B cell (primary cell): ENCODE measurements at regions of chr22 and their contacts with region 1.

Region 1: GRCh38 chr22:35376728-35377472 is 4.0 kb upstream of the HMOX1 start:
- DNase-seq: peak; percentile 87
- ATAC-seq: peak; percentile 77
- H3K4me3 ChIP-seq: peak overlapping the region in 1 of 5 experiments; percentile 38
- H3K4me3 Mint-ChIP-seq: peak overlapping the region; percentile 79
- H3K27ac ChIP-seq: no peak overlapping the region
- H3K27ac Mint-ChIP-seq: peak overlapping the region; percentile 93
- H3K4me1 ChIP-seq: peaks cover 35 to 46% of the 10 kb centered on the region in 2 donors
- H3K4me1 Mint-ChIP-seq: peaks cover 50% of the 10 kb centered on the region
- H3K27me3 ChIP-seq: peaks cover 0 to 8% (median 0%) of the 10 kb centered on the region in 4 experiments
- H3K27me3 Mint-ChIP-seq: no peaks in the 10 kb centered on the region
- CTCF ChIP-seq: no peak

Region 2: GRCh38 chr22:35092406-35092805 is 284.5 kb before region 1 on chr22:
- CTCF ChIA-PET with region 1: no interaction called
- POLR2A ChIA-PET with region 1: no interaction called
- intact Hi-C with region 1: no loop called
- DNase-seq: no peak
- ATAC-seq: no peak
- H3K4me3 ChIP-seq: no peak overlapping the region
- H3K4me3 Mint-ChIP-seq: no peak overlapping the region
- H3K27ac ChIP-seq: no peak overlapping the region
- H3K27ac Mint-ChIP-seq: no peak overlapping the region
- H3K4me1 ChIP-seq: no peaks in the 10 kb centered on the region
- H3K4me1 Mint-ChIP-seq: no peaks in the 10 kb centered on the region
- H3K27me3 ChIP-seq: peaks cover 0 to 16% (median 6%) of the 10 kb centered on the region in 4 experiments
- H3K27me3 Mint-ChIP-seq: peaks cover 54% of the 10 kb centered on the region
- CTCF ChIP-seq: no peak

Region 3: GRCh38 chr22:35257321-35258190 is 119.3 kb before region 1 on chr22 and contains the start of gene HMGXB4:
- CTCF ChIA-PET with region 1: no interaction called
- POLR2A ChIA-PET with region 1: interaction called, 10 read pairs
- intact Hi-C with region 1: no loop called
- DNase-seq: peak; percentile 93
- ATAC-seq: peak; percentile 88
- H3K4me3 ChIP-seq: peak within 1 kb of the TSS; percentile 64 to 79 (median 71)
- H3K4me3 Mint-ChIP-seq: peak within 1 kb of the TSS; percentile 92
- H3K27ac ChIP-seq: peak within 1 kb of the TSS; percentile 71 to 91
- H3K27ac Mint-ChIP-seq: peak within 1 kb of the TSS; percentile 94
- H3K4me1 ChIP-seq: peaks cover 12 to 15% of the 10 kb centered on the region in 2 donors
- H3K4me1 Mint-ChIP-seq: peaks cover 21% of the 10 kb centered on the region
- H3K27me3 ChIP-seq: no peaks in the 10 kb centered on the region
- H3K27me3 Mint-ChIP-seq: no peaks in the 10 kb centered on the region
- CTCF ChIP-seq: peak; percentile 38
- total RNA-seq, gene HMGXB4: 25.2 and 28.7 TPM in 2 replicates

Region 4: GRCh38 chr22:35392357-35392756 is 15.5 kb after region 1 on chr22:
- CTCF ChIA-PET with region 1: interaction called, 9 read pairs
- POLR2A ChIA-PET with region 1: interaction called, 19 read pairs
- intact Hi-C with region 1: no loop called
- DNase-seq: peak; percentile 59
- ATAC-seq: peak; percentile 79
- H3K4me3 ChIP-seq: no peak overlapping the region
- H3K4me3 Mint-ChIP-seq: peak overlapping the region; percentile 54
- H3K27ac ChIP-seq: peak overlapping the region; percentile 34 to 48
- H3K27ac Mint-ChIP-seq: peak overlapping the region; percentile 73
- H3K4me1 ChIP-seq: peaks cover 22 to 32% of the 10 kb centered on the region in 2 donors
- H3K4me1 Mint-ChIP-seq: peaks cover 34% of the 10 kb centered on the region
- H3K27me3 ChIP-seq: no peaks in the 10 kb centered on the region
- H3K27me3 Mint-ChIP-seq: no peaks in the 10 kb centered on the region
- CTCF ChIP-seq: no peak

Region 5: GRCh38 chr22:35399678-35400334 is 22.9 kb after region 1 on chr22 and contains the start of gene MCM5:
- CTCF ChIA-PET with region 1: interaction called, 9 read pairs
- POLR2A ChIA-PET with region 1: interaction called, 16 read pairs
- intact Hi-C with region 1: loop called (anchors 1 kb)
- DNase-seq: peak; percentile 98
- ATAC-seq: peak; percentile 97
- H3K4me3 ChIP-seq: peak within 1 kb of the TSS; percentile 76 to 100 (median 90)
- H3K4me3 Mint-ChIP-seq: peak within 1 kb of the TSS; percentile 98
- H3K27ac ChIP-seq: peak within 1 kb of the TSS; percentile 82 to 92
- H3K27ac Mint-ChIP-seq: peak within 1 kb of the TSS; percentile 98
- H3K4me1 ChIP-seq: peaks cover 35 to 64% of the 10 kb centered on the region in 2 donors
- H3K4me1 Mint-ChIP-seq: peaks cover 50% of the 10 kb centered on the region
- H3K27me3 ChIP-seq: no peaks in the 10 kb centered on the region
- H3K27me3 Mint-ChIP-seq: no peaks in the 10 kb centered on the region
- CTCF ChIP-seq: no peak
- total RNA-seq, gene MCM5: 203 and 221 TPM in 2 replicates

Region 6: DNA sequence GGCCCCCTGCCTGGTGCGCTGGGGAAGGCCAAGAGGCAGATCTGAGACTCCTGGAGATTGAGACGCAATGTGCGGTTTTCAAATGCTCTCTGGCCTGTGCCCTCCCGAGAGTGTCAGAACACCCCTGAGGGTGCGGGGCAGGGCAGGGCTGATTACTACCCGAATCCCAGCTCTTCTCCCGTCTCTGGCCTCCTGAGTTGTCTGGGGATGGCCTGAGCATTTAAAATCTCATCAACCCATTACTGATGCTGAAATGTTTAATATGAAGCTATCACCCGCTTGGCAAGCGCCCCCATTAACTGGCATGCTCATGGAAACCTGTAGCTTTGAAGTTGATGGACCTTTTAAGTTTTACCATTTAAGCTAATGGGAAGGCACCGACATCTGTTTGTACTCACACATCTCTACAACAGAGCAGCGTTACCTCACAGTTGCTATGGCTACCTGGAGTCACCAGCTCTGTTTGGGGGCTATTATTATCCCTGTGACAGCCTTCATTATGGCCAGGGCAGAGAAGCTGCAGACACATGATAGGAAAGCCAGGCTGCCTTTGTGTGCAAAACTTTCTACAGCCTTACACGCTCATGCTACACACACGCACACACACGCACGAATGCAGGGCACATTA is 243.8 kb after region 1 on chr22:
- CTCF ChIA-PET with region 1: no interaction called
- POLR2A ChIA-PET with region 1: no interaction called
- intact Hi-C with region 1: no loop called
- DNase-seq: no peak
- ATAC-seq: no peak
- H3K4me3 ChIP-seq: no peak overlapping the region
- H3K4me3 Mint-ChIP-seq: no peak overlapping the region
- H3K27ac ChIP-seq: no peak overlapping the region
- H3K27ac Mint-ChIP-seq: no peak overlapping the region
- H3K4me1 ChIP-seq: no peaks in the 10 kb centered on the region
- H3K4me1 Mint-ChIP-seq: peaks cover 2% of the 10 kb centered on the region
- H3K27me3 ChIP-seq: peaks cover 0 to 20% (median 13%) of the 10 kb centered on the region in 4 experiments
- H3K27me3 Mint-ChIP-seq: peaks cover 19% of the 10 kb centered on the region
- CTCF ChIP-seq: no peak